ENCODE measurements at regions of chr16 and their contacts with region 1.

Region 1: GRCh38 chr16:64051824-64052223 is 1070.0 kb downstream of the CDH11 start:
- DNase-seq: peak; percentile 4
- H3K4me3 ChIP-seq: no peak overlapping the region
- H3K27ac ChIP-seq: no peak overlapping the region
- H3K4me1 ChIP-seq: no peaks in the 10 kb centered on the region
- H3K27me3 ChIP-seq: no peaks in the 10 kb centered on the region
- CTCF ChIP-seq: peak; percentile 43 to 48

Region 2: DNA sequence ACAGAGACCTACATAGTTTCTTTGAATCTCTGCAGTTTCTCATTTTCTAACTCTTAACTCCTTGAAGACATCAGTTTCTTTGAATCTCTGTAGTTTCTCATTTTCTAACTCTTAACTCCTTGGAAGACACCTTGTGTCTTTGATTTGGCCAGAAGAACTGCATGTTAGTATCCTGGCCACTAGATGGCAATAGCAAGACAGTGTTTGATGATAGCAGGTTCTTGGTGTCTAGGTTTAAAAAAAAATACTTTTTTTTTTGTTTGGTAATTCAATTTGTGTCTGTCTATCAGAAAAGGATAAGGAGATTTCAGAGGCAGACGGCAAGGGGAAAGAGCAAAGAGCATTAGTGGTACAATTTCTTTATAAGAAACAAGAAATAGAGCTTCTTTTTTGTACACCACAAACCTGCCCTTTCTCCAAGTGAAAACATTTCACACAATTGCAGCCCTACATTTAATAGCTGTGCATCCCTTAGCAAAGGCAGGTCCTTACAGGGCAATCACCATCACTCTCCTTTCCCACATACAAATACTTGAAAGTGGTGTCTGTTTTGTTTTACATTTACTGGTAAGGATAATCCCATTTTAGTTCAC is 690.7 kb before region 1 on chr16:
- CTCF ChIA-PET with region 1: no interaction called
- dilution Hi-C with region 1: no loop called
- in situ Hi-C with region 1: no loop called
- intact Hi-C with region 1: loop called (anchors 1 kb)
- DNase-seq: peak; percentile 28
- H3K4me3 ChIP-seq: no peak overlapping the region
- H3K27ac ChIP-seq: no peak overlapping the region
- H3K4me1 ChIP-seq: no peaks in the 10 kb centered on the region
- H3K27me3 ChIP-seq: no peaks in the 10 kb centered on the region
- CTCF ChIP-seq: peak; percentile 82 to 85

Measured in mammary epithelial cell (primary cell).